OCI-LY7 (cell line): ENCODE measurements at regions of chr11 and their contacts with region 1.

Region 1: DNA sequence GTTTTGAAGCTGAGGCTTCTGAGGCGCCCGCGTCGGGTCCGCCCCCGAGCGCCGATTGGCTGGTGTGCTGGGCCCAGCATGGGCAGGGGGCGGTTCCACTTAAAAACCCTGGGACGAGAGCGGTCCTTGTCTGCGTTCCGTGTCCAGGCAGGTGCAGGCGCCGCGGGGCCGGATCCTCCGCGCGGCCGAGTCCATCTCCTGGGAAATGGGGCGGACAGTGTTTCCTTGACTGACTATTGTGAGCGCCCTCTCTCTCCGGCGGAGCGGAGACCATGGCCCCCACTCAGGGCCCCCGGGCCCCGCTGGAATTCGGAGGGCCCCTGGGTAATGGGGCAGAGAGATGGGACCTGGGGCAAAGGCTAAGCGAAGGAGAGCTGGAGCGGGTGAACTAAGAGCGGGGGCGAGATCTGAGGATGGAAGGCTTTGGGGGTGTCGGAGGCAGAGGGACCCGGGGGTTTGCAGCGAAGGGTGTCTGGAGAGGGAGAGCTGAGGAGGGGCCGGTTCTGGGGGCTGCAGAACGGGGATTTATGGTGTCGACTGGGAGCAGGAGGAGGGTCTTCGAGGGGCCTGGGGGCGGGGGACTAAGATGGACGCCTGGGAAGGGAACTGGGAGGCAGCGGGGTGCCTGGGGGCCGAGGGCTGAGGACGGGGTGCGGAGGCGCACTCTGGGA is at the start of gene TM7SF2:
- DNase-seq: peak; percentile 97
- H3K4me3 ChIP-seq: peak within 1 kb of the TSS; percentile 69
- H3K27ac ChIP-seq: peak within 1 kb of the TSS; percentile 73
- H3K4me1 ChIP-seq: peaks cover 55% of the 10 kb centered on the region
- CTCF ChIP-seq: no peak
- total RNA-seq, gene TM7SF2: 25.8 and 30.1 TPM in 2 replicates

Region 2: GRCh38 chr11:64887757-64888405 is 224.0 kb before region 1 on chr11:
- CTCF ChIA-PET with region 1: no interaction called
- POLR2A ChIA-PET with region 1: no interaction called
- intact Hi-C with region 1: no loop called
- DNase-seq: peak; percentile 86
- H3K4me3 ChIP-seq: peak overlapping the region; percentile 53
- H3K27ac ChIP-seq: peak overlapping the region; percentile 44
- H3K4me1 ChIP-seq: peaks cover 40% of the 10 kb centered on the region
- CTCF ChIP-seq: peak; percentile 93

Region 3: GRCh38 chr11:65095974-65096806 is 15.7 kb before region 1 on chr11 and contains the start of gene VPS51:
- CTCF ChIA-PET with region 1: no interaction called
- POLR2A ChIA-PET with region 1: interaction called, 14 read pairs
- intact Hi-C with region 1: no loop called
- DNase-seq: peak; percentile 94
- H3K4me3 ChIP-seq: peak within 1 kb of the TSS; percentile 78
- H3K27ac ChIP-seq: peak within 1 kb of the TSS; percentile 68
- H3K4me1 ChIP-seq: peaks cover 16% of the 10 kb centered on the region
- CTCF ChIP-seq: no peak
- total RNA-seq, gene VPS51: 214 and 221 TPM in 2 replicates

Region 4: DNA sequence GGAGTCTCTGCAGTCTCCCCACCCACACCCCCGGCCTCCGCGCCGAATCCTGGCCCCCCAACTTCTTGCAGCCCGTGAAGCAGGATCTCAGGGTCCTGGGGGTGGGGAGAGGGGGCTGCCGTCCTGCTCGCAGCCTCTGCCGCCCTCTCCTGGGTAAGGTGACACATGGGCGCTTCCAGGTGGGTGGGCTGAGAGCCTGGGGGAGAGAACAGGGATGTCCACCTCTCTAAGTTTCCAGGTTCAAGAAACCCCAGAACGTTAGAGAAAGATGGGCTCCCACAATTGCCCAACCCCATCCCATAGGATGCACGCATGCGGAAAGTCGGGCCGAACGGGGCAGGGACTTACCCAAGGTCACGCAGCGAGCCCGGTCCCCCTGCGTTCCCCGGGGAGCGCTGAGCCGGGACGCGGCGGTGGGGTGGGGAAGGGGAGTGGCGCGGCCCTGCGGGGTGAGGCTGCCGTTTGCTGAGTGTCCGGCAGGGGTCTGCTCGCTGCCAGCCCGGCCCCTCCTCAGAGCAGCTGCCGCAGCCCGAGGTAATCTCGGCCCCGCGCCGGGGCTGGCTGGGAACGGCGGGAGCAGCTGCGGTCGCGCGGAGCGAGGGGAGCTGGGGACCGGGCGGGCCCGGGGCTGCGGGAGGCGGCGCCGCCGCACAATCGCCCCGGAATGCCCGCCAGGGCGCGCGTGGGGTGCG is 69.1 kb after region 1 on chr11:
- CTCF ChIA-PET with region 1: no interaction called
- POLR2A ChIA-PET with region 1: no interaction called
- intact Hi-C with region 1: loop called (anchors 1 kb)
- DNase-seq: peak; percentile 83
- H3K4me3 ChIP-seq: peak overlapping the region; percentile 91
- H3K27ac ChIP-seq: peak overlapping the region; percentile 64
- H3K4me1 ChIP-seq: peaks cover 26% of the 10 kb centered on the region
- CTCF ChIP-seq: peak; percentile 89

Region 5: DNA sequence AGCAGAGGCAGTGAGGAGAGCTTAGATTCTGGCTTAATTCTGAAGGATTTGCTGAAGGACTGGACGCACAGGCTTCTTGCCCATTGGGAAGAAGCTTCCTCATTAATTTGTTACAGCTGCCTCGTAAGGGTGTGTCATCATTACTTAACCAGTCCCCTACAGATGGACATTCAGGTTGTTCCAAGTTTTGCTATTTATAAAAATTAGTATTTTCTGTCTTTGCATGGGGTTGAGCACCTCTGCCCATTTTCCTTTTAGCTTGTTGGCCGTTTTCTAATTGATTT is 108.0 kb after region 1 on chr11:
- CTCF ChIA-PET with region 1: no interaction called
- POLR2A ChIA-PET with region 1: no interaction called
- intact Hi-C with region 1: no loop called
- DNase-seq: no peak
- H3K4me3 ChIP-seq: no peak overlapping the region
- H3K27ac ChIP-seq: no peak overlapping the region
- H3K4me1 ChIP-seq: peaks cover 1% of the 10 kb centered on the region
- CTCF ChIP-seq: no peak

Region 6: DNA sequence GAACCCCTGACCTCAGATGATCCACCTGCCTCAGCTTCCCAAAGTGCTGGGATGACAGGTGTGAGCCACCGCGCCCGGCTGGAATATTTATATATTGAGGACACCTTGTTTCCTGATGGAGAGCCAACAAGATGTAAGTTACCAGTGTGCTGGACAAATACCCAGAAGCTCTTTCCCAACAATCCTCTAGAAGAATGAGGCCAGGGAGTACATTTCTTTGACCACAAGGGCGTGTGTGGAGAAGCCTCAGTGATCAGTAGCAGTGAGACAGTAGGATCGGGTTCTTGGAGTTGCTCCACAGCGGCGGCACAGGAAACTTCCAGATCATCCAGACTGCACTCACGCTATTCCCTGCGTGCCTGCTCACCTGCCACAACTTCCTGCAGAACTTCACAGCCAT is 139.6 kb after region 1 on chr11:
- CTCF ChIA-PET with region 1: no interaction called
- POLR2A ChIA-PET with region 1: no interaction called
- intact Hi-C with region 1: loop called (anchors 2 kb)
- DNase-seq: no peak
- H3K4me3 ChIP-seq: no peak overlapping the region
- H3K27ac ChIP-seq: no peak overlapping the region
- H3K4me1 ChIP-seq: no peaks in the 10 kb centered on the region
- CTCF ChIP-seq: no peak

Region 7: GRCh38 chr11:65314501-65315203 is 202.8 kb after region 1 on chr11 and contains the start of gene CDC42EP2:
- CTCF ChIA-PET with region 1: no interaction called
- POLR2A ChIA-PET with region 1: no interaction called
- intact Hi-C with region 1: loop called (anchors 2 kb)
- DNase-seq: peak; percentile 74
- H3K4me3 ChIP-seq: peak within 1 kb of the TSS; percentile 74
- H3K27ac ChIP-seq: no peak within 1 kb of the TSS
- H3K4me1 ChIP-seq: peaks cover 9% of the 10 kb centered on the region
- CTCF ChIP-seq: no peak
- total RNA-seq, gene CDC42EP2: not detected in 2 replicates